Heart left ventricle (tissue), 16 donors: ENCODE measurements at regions of chr5 and their contacts with region 1.

Region 1: GRCh38 chr5:173331956-173332479 is 3.8 kb upstream of the STC2 start:
- DNase-seq: peak; percentile 78 to 89 (median 85)
- ATAC-seq: peak; percentile 75 to 81 (median 80)
- H3K4me3 ChIP-seq: no peak overlapping the region
- H3K27ac ChIP-seq: no peak overlapping the region
- H3K4me1 ChIP-seq: peaks cover 0 to 38% (median 22%) of the 10 kb centered on the region in 12 donors
- H3K27me3 ChIP-seq: peaks cover 0 to 41% (median 5%) of the 10 kb centered on the region in 9 donors
- CTCF ChIP-seq: peak; percentile 84 to 97 (median 92)
- POLR2A ChIP-seq: no peak

Region 2: GRCh38 chr5:173293817-173294672 is 38.0 kb before region 1 on chr5:
- intact Hi-C with region 1: loop called (anchors 1 to 2 kb)
- DNase-seq: peak; percentile 60 to 86 (median 72)
- ATAC-seq: peak; percentile 11 to 65 (median 46)
- H3K4me3 ChIP-seq: peak overlapping the region in 5 of 12 donors; percentile 5 to 32 (median 11)
- H3K27ac ChIP-seq: no peak overlapping the region
- H3K4me1 ChIP-seq: peaks cover 0 to 21% (median 8%) of the 10 kb centered on the region in 12 donors
- H3K27me3 ChIP-seq: peaks cover 0 to 28% (median 0%) of the 10 kb centered on the region in 9 donors
- CTCF ChIP-seq: peak; percentile 77 to 96 (median 86)
- POLR2A ChIP-seq: no peak

Region 3: DNA sequence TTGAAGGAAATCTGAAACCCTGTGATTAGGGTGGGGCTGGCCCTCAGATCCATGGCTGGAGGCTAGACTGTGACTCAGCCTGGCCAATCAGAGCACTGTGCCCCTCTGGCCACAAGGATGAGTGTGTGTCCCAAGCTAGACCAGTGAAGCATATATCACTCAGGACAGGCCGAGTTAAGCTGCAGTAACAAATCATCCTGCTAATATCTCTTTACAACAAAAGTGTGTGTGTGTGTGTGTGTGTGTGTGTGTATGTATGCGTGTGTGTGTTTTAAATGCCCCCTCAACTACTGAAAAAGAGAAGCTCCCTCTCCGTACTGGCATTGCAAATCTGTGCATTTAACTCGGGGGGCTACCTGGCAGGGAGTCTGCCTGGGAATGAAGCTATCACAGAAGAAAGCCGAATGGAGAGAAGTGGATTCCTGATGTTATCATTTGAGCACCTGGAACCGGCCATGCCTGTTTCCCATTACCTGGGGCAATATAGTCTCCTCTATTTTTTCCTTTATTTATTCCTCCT is 29.4 kb before region 1 on chr5:
- intact Hi-C with region 1: loop called in 1 of 10 experiments (anchors 1 kb)
- DNase-seq: no peak
- ATAC-seq: peak in 3 of 4 donors; percentile 32 to 47 (median 34)
- H3K4me3 ChIP-seq: no peak overlapping the region
- H3K27ac ChIP-seq: no peak overlapping the region
- H3K4me1 ChIP-seq: peaks cover 0 to 19% (median 0%) of the 10 kb centered on the region in 12 donors
- H3K27me3 ChIP-seq: no peaks in the 10 kb centered on the region
- CTCF ChIP-seq: no peak
- POLR2A ChIP-seq: no peak

Region 4: DNA sequence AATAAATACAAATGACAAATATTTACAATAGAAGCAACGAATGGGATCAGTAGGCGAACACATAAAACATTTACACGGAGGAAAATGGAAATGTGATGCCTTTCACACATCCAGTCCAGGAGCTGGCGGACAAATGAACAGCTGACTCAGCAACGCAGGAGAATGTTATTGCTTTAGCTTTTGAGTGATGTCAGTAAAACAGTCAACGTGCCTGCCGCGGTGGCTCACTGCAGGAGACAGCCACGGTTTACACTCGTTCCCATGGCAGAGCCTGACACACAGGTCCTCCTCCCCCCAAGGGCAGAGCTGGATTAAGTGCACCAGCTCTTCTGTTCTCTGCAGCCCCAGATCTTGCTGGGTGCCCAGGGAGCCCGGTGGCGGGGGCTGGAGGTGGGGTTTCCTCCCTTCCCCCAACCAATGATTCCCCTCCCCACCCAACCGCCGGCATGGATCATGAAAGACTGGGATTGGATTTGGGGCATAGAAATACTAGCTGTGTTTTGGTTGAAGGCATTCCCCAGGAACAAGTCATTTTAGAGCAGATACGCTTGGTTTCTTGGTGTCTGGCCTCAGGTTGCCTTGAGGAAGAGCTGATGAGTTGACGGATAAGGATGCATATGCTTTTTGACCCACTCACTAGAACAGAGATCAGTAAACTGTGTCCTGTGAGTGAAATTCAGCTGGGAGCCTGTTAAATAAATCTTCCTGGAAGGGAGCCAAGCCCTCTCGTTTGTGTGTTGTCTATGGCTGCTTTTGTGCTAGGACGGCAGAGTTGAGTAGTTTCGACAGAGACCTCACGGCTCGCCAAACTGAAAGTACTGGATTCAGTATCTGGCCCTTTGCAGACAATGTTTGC is 16.3 kb before region 1 on chr5:
- intact Hi-C with region 1: loop called in 1 of 10 experiments (anchors 1 kb)
- DNase-seq: peak in 4 of 5 donors; percentile 47 to 66 (median 62)
- ATAC-seq: peak; percentile 35 to 69 (median 40)
- H3K4me3 ChIP-seq: peak overlapping the region in 8 of 12 donors; percentile 1 to 28 (median 9)
- H3K27ac ChIP-seq: peak overlapping the region in 10 of 12 donors; percentile 19 to 60 (median 35)
- H3K4me1 ChIP-seq: peaks cover 5 to 54% (median 31%) of the 10 kb centered on the region in 12 donors
- H3K27me3 ChIP-seq: no peaks in the 10 kb centered on the region
- CTCF ChIP-seq: no peak
- POLR2A ChIP-seq: no peak